ENCODE measurements at regions of chr19 and their contacts with region 1.

Region 1: GRCh38 chr19:14425696-14426138 is 6.6 kb upstream of the DDX39A start:
- DNase-seq: no peak
- H3K4me3 ChIP-seq: no peak overlapping the region
- H3K27ac ChIP-seq: no peak overlapping the region
- H3K4me1 ChIP-seq: no peaks in the 10 kb centered on the region
- H3K27me3 ChIP-seq: no peaks in the 10 kb centered on the region
- CTCF ChIP-seq: no peak

Region 2: DNA sequence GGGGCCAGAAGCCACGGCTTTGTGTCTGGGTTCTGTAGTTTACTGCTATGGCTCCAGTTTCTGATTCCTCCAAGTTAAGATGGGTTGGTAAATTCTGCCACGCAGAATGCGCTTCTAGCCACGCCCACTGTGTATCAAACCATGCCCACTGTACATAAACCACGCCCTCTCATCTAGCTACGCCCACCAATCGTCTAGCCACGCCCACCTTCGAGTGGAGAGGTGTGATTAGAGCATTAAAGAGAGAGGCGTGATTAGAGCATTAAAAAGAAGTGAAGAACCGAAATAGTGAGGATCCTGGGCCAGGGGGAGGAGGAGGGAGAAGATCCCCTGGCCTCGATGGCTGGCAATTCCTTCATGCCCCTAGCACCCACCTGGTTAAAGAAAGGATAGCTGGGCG is 88.2 kb before region 1 on chr19:
- CTCF ChIA-PET with region 1: no interaction called
- POLR2A ChIA-PET with region 1: no interaction called
- intact Hi-C with region 1: no loop called
- DNase-seq: no peak
- H3K4me3 ChIP-seq: no peak overlapping the region
- H3K27ac ChIP-seq: no peak overlapping the region
- H3K4me1 ChIP-seq: peaks cover 11% of the 10 kb centered on the region
- H3K27me3 ChIP-seq: no peaks in the 10 kb centered on the region
- CTCF ChIP-seq: no peak

Region 3: DNA sequence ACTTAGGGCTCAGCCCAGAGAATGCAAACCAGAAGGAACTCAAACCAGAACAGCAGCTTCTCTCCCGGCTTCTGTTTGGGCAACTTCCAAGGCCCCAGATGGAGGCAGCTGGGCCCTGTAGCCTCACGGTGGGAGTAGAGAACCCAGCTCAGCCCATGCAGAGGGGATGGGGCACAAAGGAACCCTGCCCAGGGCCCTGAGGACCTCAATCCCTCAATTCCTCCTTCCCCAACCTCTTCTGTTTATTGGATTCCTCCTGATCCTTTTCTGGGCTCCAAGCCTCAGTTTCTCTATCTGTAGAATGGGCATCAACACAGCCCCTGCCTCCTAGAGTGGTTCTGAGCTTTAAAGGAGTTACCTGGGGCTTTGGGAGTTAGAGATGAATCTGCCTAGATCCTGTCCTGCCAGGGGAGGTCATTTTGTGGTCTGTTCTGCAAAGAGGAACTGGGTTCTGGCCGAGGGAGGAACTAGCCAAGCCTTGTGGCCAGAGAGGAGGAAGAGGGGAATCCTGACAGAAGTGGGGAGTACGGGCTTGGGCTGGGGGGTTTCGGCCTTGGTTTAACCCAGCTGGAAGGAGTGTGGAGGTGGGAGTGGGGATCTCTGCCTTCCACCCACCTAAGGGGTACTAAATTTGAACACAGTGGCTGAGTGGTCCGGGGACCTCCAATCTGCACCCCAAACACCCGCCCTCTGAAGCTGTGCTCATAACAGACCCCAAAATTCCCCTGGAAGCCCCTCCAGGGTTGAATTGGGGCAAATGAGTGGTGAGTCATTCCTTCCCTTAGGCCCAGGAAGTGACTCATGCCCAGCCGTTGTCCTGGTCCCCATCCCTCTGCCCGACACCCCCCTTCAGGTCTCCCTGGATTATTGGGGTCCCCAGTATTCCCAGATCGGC is 41.8 kb before region 1 on chr19:
- CTCF ChIA-PET with region 1: no interaction called
- POLR2A ChIA-PET with region 1: interaction called, 12 read pairs
- intact Hi-C with region 1: no loop called
- DNase-seq: peak in 1 of 2 experiments; percentile 14
- H3K4me3 ChIP-seq: peak overlapping the region; percentile 10; the same call in 1 of the 2 replicates
- H3K27ac ChIP-seq: peak overlapping the region; percentile 30
- H3K4me1 ChIP-seq: peaks cover 36% of the 10 kb centered on the region
- H3K27me3 ChIP-seq: no peaks in the 10 kb centered on the region
- CTCF ChIP-seq: no peak

Region 4: DNA sequence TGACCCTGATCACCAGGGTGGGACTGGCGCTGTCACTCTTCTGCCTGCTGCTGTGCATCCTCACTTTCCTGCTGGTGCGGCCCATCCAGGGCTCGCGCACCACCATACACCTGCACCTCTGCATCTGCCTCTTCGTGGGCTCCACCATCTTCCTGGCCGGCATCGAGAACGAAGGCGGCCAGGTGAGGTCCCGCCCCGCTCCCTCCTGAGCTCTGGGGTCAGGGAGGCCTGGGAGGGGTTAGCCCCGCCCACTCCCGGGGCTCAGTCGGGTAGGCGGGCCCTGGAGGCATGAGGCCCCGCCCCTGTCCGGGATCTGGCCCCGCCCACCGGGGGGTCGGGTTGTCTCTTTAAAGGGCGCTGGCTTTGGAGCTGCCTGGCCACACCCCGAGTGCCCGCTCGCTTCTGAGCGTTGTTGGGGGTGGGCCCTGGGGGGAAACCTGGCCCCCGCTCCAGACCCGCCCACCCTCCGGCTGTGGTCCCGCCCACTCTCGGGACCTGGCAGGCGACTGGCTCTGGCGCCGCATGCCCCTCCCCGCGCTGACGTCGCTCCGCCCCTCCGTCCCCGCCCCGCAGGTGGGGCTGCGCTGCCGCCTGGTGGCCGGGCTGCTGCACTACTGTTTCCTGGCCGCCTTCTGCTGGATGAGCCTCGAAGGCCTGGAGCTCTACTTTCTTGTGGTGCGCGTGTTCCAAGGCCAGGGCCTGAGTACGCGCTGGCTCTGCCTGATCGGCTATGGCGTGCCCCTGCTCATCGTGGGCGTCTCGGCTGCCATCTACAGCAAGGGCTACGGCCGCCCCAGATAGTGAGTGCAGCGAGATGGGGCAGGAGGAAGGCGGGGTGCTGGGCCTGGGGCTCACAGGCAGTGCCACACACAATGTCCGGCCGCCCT is 19.7 kb before region 1 on chr19:
- CTCF ChIA-PET with region 1: no interaction called
- POLR2A ChIA-PET with region 1: no interaction called
- intact Hi-C with region 1: no loop called
- DNase-seq: peak; percentile 81 to 89
- H3K4me3 ChIP-seq: peak overlapping the region; percentile 37; the same call in 1 of the 2 replicates
- H3K27ac ChIP-seq: no peak overlapping the region
- H3K4me1 ChIP-seq: 0 out of 2 replicates have a peak, but pooled peaks cover 10% of the 10 kb centered on the region
- H3K27me3 ChIP-seq: no peaks in the 10 kb centered on the region
- CTCF ChIP-seq: peak; percentile 70

Measured in PC-9 (cell line).